HAP-1 (cell line): ENCODE measurements at regions of chr12 and their contacts with region 1.

Region 1: DNA sequence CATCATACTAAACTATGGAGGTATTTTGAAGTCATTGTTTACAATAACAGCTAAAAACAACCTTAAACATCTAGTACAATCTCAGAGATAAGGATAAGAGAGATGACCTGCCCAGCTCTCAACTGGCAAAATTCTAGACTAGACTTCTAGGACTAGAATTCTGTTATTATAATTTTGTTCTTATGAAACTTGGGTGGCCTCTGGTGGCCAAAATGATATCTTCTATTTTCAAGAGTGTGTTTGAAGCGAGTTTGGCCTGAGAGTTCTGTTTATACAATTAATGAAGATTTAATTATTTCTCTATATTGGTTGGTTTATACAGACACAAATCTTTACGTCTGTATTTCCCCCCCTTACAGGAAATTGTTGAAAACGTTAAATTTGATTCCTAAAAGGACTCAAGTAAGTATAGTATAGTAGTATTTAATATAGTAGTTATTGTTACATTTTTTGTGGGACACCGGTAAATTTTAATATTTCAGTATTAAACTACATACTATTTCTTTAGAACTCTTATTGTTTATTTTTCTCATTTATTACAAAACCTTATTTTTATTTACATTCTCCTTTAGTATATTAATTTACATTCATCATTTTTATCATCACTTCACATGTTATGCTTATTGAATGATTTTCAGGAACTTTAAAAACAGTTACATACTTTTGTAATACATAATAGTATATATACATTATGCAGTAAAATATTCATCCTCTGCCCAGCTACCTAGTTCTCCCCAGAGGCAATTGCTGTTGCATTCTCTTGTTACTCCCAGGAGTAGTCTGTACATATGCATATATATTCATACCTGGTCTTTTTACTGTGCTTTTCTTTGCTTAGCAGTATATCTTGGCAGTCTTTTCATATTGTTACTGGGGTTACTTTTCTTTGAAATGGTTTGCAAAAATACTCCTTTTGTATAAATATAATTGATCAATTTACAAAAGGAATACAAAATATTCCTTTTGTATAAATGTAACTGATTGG is 6.6 kb downstream of the PPHLN1 start:
- DNase-seq: peak; percentile 44 to 63
- H3K4me3 ChIP-seq: no peak overlapping the region
- H3K4me1 ChIP-seq: peaks cover 53% of the 10 kb centered on the region
- H3K27me3 ChIP-seq: no peaks in the 10 kb centered on the region

Region 2: GRCh38 chr12:42129595-42130204 is 202.9 kb before region 1 on chr12:
- in situ Hi-C with region 1: loop called (anchors 10 kb)
- DNase-seq: peak; percentile 65 to 70
- H3K4me3 ChIP-seq: no peak overlapping the region
- H3K4me1 ChIP-seq: peaks cover 25% of the 10 kb centered on the region
- H3K27me3 ChIP-seq: no peaks in the 10 kb centered on the region

Region 3: GRCh38 chr12:42180990-42181596 is 151.5 kb before region 1 on chr12:
- in situ Hi-C with region 1: no loop called
- DNase-seq: peak; percentile 34 to 68
- H3K4me3 ChIP-seq: no peak overlapping the region
- H3K4me1 ChIP-seq: peaks cover 28% of the 10 kb centered on the region
- H3K27me3 ChIP-seq: no peaks in the 10 kb centered on the region

Region 4: GRCh38 chr12:42396473-42397259 is 64.1 kb after region 1 on chr12:
- in situ Hi-C with region 1: no loop called
- DNase-seq: no peak
- H3K4me3 ChIP-seq: no peak overlapping the region
- H3K4me1 ChIP-seq: peaks cover 8% of the 10 kb centered on the region; the same call in 1 of the 2 replicates
- H3K27me3 ChIP-seq: no peaks in the 10 kb centered on the region